PC-3 (cell line): ENCODE measurements at regions of chr3 and their contacts with region 1.

Region 1: DNA sequence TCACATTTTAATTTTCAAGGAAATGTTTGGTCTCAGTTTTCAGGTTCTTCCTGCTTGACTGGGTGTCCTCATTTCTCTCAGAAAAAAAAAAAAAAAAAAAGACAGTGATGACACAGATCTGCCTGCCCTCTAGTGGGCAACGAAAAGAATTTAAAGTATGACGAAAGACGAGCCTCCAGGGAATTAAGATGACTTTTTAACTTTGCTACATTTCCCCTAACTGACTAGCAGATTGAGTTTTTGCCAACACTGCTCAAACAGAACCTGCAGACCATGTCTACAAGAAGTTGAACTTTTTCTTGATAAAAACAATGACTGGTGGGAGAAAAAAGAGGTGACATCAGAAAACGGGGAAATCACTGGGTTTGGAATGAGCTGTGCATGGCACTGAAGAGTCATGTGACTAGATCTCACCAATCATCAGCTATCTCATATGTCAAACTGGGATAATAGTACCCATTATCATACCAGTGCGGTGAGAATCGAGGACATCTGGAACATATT is 40.8 kb downstream of the EOMES start:
- DNase-seq: peak; percentile 82
- ATAC-seq: peak; percentile 54
- H3K4me3 ChIP-seq: peak overlapping the region; percentile 58
- H3K27ac ChIP-seq: peak overlapping the region; percentile 21
- H3K4me1 ChIP-seq: peaks cover 34% of the 10 kb centered on the region
- H3K27me3 ChIP-seq: no peaks in the 10 kb centered on the region
- CTCF ChIP-seq: peak; percentile 91

Region 2: DNA sequence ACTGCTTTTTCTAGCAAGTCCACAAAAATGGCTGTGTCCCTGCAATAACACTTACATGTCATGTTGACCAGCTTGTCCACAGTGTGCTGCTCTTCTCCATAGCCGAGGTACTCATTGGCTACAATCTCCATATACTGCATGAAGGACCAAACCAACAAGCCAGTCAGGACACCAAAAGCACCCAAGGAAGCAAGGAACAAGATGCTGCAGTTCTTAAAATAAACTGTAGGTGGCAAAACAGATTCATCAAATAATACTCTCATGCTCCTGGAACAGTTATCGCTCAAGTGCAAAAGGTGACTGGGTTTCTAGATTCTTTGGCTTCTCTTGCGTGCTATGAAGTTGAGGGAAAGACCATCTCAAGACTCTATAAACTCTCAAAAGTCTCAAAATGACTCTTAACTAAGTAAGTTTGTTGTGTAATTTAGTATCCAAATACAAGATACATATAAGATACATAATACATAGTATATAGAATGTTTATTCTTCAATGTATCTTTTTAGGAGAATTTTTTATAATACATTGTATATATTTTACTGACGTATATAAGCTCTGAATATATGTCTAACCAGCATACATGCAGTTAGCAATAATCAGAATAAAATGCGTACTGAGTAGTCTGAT is 369.1 kb before region 1 on chr3:
- CTCF ChIA-PET with region 1: no interaction called
- POLR2A ChIA-PET with region 1: no interaction called
- intact Hi-C with region 1: loop called (anchors 2 kb)
- DNase-seq: peak; percentile 86
- ATAC-seq: peak; percentile 76
- H3K4me3 ChIP-seq: no peak overlapping the region
- H3K27ac ChIP-seq: peak overlapping the region; percentile 16
- H3K4me1 ChIP-seq: peaks cover 20% of the 10 kb centered on the region
- H3K27me3 ChIP-seq: no peaks in the 10 kb centered on the region
- CTCF ChIP-seq: peak; percentile 87

Region 3: GRCh38 chr3:27467545-27467944 is 213.8 kb before region 1 on chr3:
- CTCF ChIA-PET with region 1: interaction called, 14 read pairs
- POLR2A ChIA-PET with region 1: no interaction called
- intact Hi-C with region 1: loop called (anchors 5 kb)
- DNase-seq: peak; percentile 72
- ATAC-seq: peak; percentile 81
- H3K4me3 ChIP-seq: no peak overlapping the region
- H3K27ac ChIP-seq: no peak overlapping the region
- H3K4me1 ChIP-seq: 0 out of 2 replicates have a peak, but pooled peaks cover 10% of the 10 kb centered on the region
- H3K27me3 ChIP-seq: no peaks in the 10 kb centered on the region
- CTCF ChIP-seq: peak; percentile 79

Region 4: DNA sequence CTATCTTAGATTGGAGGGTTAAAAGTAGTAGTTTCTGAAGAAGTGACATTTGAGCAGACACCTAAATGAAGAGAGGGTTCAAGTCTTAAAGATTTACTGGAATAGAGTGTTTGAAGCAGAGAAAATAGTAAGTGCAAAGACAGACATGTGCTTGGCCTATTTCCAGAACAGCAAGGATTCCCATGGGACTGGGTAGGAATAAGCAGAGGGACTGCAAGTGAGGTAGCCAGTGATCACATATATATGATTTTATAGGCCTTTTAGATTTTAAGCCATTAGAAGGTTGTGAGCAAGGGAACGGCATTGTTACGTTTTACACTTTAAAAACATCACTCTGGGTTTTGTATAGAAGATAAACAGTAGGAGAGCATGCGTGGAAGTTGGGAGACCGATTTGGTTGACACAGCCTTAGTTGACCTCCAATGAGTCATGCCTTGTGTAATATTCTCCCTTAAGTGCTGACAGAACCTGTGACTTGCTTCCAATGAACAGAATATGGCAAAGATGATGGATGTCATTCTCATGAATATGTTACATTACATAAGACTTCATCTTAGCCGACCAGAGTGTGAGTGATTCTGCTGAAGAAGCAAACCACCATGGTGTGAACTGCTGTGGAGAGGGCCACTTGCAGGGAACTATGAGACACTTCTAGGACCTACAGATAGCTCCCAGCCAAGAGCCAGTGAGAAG is 160.0 kb before region 1 on chr3:
- CTCF ChIA-PET with region 1: no interaction called
- POLR2A ChIA-PET with region 1: no interaction called
- intact Hi-C with region 1: loop called (anchors 1 kb)
- DNase-seq: peak; percentile 90
- ATAC-seq: peak; percentile 70
- H3K4me3 ChIP-seq: no peak overlapping the region
- H3K27ac ChIP-seq: peak overlapping the region; percentile 64
- H3K4me1 ChIP-seq: peaks cover 43% of the 10 kb centered on the region
- H3K27me3 ChIP-seq: no peaks in the 10 kb centered on the region
- CTCF ChIP-seq: no peak

Region 5: DNA sequence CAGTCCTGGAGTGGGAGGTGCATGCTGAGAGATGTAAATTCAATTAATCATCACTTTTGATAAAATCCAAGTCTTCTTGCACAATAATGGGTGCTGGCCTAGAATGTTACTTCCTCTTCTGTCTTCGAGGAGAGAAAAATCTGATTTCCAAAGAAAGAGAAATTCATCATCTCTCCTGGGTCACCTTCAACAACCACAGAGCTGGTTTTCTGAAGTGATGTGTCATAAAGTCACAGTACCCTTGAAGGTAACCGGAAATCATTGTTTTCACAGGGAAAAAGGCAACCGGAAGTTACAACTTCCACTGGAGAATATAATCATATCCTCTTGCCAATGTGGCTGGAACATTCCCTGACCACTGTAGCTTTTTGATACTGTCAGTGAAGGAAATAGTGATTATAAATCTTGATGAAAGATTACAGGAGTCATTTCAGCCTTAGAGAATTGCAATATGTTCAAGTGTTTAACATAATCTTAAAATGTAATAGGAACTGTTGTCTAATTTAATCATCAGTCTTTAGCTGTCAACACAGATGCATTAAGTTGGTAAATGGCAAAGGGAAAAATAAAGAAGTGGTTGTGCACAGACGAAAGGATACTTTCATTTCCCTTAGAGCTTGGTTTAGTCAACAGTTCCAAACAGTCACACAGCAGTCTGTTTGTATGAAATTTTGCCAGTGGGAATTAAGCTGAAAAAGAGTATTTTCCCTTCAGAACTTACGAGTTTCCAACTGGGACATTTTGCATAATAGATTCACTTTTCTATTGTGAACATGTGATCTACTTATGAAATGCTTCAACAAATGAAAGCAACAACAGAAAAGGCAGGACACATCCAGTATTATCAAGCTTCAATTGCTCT is 90.6 kb before region 1 on chr3:
- CTCF ChIA-PET with region 1: interaction called, 4 read pairs
- POLR2A ChIA-PET with region 1: interaction called, 13 read pairs
- intact Hi-C with region 1: no loop called
- DNase-seq: peak; percentile 49
- ATAC-seq: peak; percentile 66
- H3K4me3 ChIP-seq: no peak overlapping the region
- H3K27ac ChIP-seq: no peak overlapping the region
- H3K4me1 ChIP-seq: peaks cover 11% of the 10 kb centered on the region
- H3K27me3 ChIP-seq: no peaks in the 10 kb centered on the region
- CTCF ChIP-seq: no peak

Region 6: DNA sequence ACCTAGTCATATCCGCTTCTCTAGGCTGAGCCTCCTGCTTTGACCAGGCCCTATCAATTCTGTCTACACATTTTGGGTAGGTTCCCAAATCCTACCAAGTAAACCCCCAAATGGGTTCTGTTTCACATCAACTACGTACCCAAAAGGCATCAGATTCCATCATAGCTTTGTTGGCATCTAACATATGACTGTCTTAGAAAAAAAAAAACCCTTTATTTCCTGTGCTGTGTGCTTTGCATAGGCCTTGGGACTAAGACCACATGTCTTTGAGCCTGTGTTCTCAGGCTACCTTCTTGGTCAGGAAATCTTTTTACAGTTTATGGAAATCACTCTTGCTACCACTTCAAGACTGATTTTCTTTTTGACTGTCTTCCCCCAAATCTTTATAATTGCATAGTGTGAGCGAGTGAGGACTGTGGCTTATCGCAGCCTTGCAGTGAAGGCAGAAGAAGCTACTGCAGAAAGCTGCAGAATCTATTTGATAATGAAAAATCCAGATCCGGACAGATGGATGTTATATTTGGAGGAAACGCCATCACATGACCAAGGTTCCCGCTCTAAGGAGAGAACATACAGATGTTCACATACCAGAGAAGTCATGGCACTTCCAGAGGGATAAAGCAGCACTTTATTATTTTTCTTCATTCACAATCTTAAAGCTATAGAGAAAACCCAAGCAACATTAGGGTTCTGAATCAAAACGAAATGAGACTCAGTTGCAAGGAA is 70.3 kb before region 1 on chr3:
- CTCF ChIA-PET with region 1: no interaction called
- POLR2A ChIA-PET with region 1: no interaction called
- intact Hi-C with region 1: no loop called
- DNase-seq: no peak
- ATAC-seq: no peak
- H3K4me3 ChIP-seq: no peak overlapping the region
- H3K27ac ChIP-seq: no peak overlapping the region
- H3K4me1 ChIP-seq: peaks cover 15% of the 10 kb centered on the region
- H3K27me3 ChIP-seq: no peaks in the 10 kb centered on the region
- CTCF ChIP-seq: no peak

Region 7: GRCh38 chr3:27666708-27667107 is 14.6 kb before region 1 on chr3:
- CTCF ChIA-PET with region 1: interaction called, 14 read pairs
- POLR2A ChIA-PET with region 1: no interaction called
- intact Hi-C with region 1: no loop called
- DNase-seq: no peak
- ATAC-seq: no peak
- H3K4me3 ChIP-seq: no peak overlapping the region
- H3K27ac ChIP-seq: no peak overlapping the region
- H3K4me1 ChIP-seq: no peaks in the 10 kb centered on the region
- H3K27me3 ChIP-seq: no peaks in the 10 kb centered on the region
- CTCF ChIP-seq: no peak

Region 8: DNA sequence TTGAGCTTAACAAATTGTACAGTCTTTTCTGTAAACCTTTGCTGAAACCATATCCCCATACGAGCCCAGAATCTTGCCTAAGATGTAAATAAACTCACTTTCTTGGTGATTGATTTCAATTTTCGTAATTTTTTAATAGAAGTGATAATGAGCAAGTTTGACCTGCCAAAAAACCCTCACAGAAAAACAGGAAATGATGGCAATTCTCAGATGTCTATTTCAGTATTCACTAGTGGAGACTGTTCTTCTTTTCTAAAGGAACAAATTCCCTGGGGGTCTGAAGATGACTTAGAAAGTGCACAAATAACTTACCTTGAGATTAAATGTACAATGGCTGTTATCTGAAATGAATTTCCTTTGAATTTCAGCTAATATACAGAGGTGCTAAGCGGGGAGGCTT is 443.6 kb after region 1 on chr3:
- CTCF ChIA-PET with region 1: no interaction called
- POLR2A ChIA-PET with region 1: no interaction called
- intact Hi-C with region 1: no loop called
- DNase-seq: no peak
- ATAC-seq: no peak; the same call in 1 of the 2 replicates
- H3K4me3 ChIP-seq: no peak overlapping the region
- H3K27ac ChIP-seq: no peak overlapping the region
- H3K4me1 ChIP-seq: no peaks in the 10 kb centered on the region
- H3K27me3 ChIP-seq: no peaks in the 10 kb centered on the region
- CTCF ChIP-seq: no peak